Heart left ventricle (tissue), 16 donors: ENCODE measurements at regions of chr2 and their contacts with region 1.

Region 1: GRCh38 chr2:218269899-218270720 is at the starts of genes AAMP and PNKD:
- DNase-seq: peak; percentile 100
- ATAC-seq: peak; percentile 92 to 96 (median 94)
- H3K4me3 ChIP-seq: peak within 1 kb of the TSS; percentile 54 to 95 (median 87)
- H3K27ac ChIP-seq: peak within 1 kb of the TSS; percentile 71 to 88 (median 80)
- H3K4me1 ChIP-seq: peaks cover 3 to 60% (median 43%) of the 10 kb centered on the region in 12 donors
- H3K27me3 ChIP-seq: no peaks in the 10 kb centered on the region
- CTCF ChIP-seq: peak in 8 of 12 donors; percentile 26 to 56 (median 36)
- POLR2A ChIP-seq: peak; percentile 15 to 89
- total RNA-seq, gene AAMP: 51.6 to 127 (median 58.0) TPM
- total RNA-seq, gene PNKD: 53.8 to 78.7 (median 72.5) TPM

Region 2: GRCh38 chr2:218216674-218217359 is 53.3 kb before region 1 on chr2 and contains the start of gene ARPC2:
- intact Hi-C with region 1: loop called in 4 of 10 experiments (anchors 1 to 10 kb)
- DNase-seq: peak; percentile 96 to 97 (median 97)
- ATAC-seq: peak; percentile 92 to 98 (median 98)
- H3K4me3 ChIP-seq: peak within 1 kb of the TSS; percentile 62 to 99 (median 96)
- H3K27ac ChIP-seq: peak within 1 kb of the TSS; percentile 84 to 98 (median 96)
- H3K4me1 ChIP-seq: peaks cover 0 to 55% (median 39%) of the 10 kb centered on the region in 12 donors
- H3K27me3 ChIP-seq: no peaks in the 10 kb centered on the region
- CTCF ChIP-seq: peak in 1 of 12 donors; percentile 10
- POLR2A ChIP-seq: peak in 1 of 2 donors; percentile 85
- total RNA-seq, gene ARPC2: 126 to 278 (median 139) TPM

Region 3: GRCh38 chr2:218286570-218287459 is 16.7 kb after region 1 on chr2:
- intact Hi-C with region 1: loop called in 6 of 10 experiments (anchors 1 to 2 kb)
- DNase-seq: peak; percentile 88 to 96 (median 95)
- ATAC-seq: peak; percentile 83 to 89 (median 85)
- H3K4me3 ChIP-seq: peak overlapping the region; percentile 28 to 70 (median 53)
- H3K27ac ChIP-seq: peak overlapping the region; percentile 89 to 100 (median 96)
- H3K4me1 ChIP-seq: peaks cover 27 to 99% (median 92%) of the 10 kb centered on the region in 12 donors
- H3K27me3 ChIP-seq: no peaks in the 10 kb centered on the region
- CTCF ChIP-seq: no peak
- POLR2A ChIP-seq: peak in 1 of 2 donors; percentile 35

Region 4: DNA sequence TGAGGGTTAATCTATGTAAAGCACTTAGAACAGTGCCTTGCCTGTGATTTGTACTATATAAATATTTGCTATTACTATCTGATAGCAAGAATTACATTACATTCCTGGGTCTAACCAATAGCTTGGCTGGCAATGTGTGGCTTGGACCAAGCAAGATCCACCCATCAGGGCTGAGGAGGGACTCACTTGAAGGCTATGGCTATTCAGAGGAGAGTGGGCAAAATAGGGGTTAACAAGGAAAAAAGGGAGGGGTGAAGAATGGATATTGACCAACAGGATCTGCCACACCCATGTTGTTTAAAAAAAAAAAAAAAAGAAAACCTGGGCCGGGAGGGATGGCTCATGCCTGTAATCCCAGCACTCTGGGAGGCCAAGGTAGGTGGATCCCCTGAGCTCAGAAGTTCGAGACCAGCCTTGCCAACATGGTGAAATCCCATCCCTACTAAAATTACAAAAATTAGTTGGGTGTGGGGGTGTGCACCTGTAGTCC is 42.2 kb after region 1 on chr2:
- intact Hi-C with region 1: no loop called
- DNase-seq: no peak
- ATAC-seq: no peak
- H3K4me3 ChIP-seq: no peak overlapping the region
- H3K27ac ChIP-seq: no peak overlapping the region
- H3K4me1 ChIP-seq: peaks cover 0 to 23% (median 0%) of the 10 kb centered on the region in 12 donors
- H3K27me3 ChIP-seq: no peaks in the 10 kb centered on the region
- CTCF ChIP-seq: no peak
- POLR2A ChIP-seq: no peak

Region 5: GRCh38 chr2:218360447-218360846 is 90.3 kb after region 1 on chr2:
- intact Hi-C with region 1: loop called in 2 of 10 experiments (anchors 1 kb)
- DNase-seq: peak in 1 of 5 donors; percentile 46
- ATAC-seq: peak in 3 of 4 donors; percentile 53 to 69 (median 58)
- H3K4me3 ChIP-seq: no peak overlapping the region
- H3K27ac ChIP-seq: peak overlapping the region in 1 of 12 donors; percentile 50
- H3K4me1 ChIP-seq: peaks cover 0 to 18% (median 0%) of the 10 kb centered on the region in 12 donors
- H3K27me3 ChIP-seq: no peaks in the 10 kb centered on the region
- CTCF ChIP-seq: no peak
- POLR2A ChIP-seq: no peak

Region 6: GRCh38 chr2:218648088-218648786 is 378.1 kb after region 1 on chr2:
- intact Hi-C with region 1: loop called in 1 of 10 experiments (anchors 10 kb)
- DNase-seq: peak in 1 of 5 donors; percentile 44
- ATAC-seq: peak; percentile 15 to 73 (median 69)
- H3K4me3 ChIP-seq: no peak overlapping the region
- H3K27ac ChIP-seq: no peak overlapping the region
- H3K4me1 ChIP-seq: peaks cover 0 to 7% (median 0%) of the 10 kb centered on the region in 12 donors
- H3K27me3 ChIP-seq: no peaks in the 10 kb centered on the region
- CTCF ChIP-seq: peak; percentile 62 to 82 (median 74)
- POLR2A ChIP-seq: no peak

Region 7: DNA sequence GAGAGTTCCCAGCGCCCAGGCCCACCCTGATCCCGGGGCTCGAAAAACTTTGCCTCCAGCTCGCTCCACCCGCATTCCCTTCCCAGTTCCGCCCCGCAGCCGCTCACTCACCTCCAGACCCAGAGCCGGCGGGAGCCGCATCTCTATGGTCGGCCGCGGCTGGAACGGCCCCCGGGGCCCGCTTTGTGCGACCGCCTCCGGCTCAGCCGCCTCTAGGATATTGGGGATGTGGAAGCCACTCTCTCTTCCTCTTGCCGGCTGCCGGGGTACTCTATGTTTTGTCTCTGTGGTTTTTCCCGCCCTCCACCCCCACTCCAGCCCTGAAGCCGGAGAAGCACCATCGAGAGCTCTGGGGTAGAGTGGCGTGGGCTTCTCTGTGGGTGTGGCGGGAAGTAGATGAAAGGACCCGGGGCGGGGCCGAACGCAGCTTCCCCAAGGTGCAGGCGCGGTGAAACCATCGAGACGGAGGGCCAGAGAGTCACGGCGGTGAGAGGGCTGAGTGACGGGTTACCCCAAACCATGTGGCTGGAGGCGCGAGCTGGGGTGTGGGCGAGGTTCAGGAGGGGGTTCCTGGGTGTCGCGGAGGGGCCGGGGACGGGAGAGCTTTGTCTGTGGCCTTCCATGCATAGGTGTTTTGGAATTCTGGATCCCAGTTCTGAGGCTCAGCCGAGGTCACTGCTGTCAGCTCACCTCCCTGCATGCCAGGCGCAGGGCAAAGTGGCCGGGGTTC is 389.3 kb after region 1 on chr2 and contains the starts of genes BCS1L and ZNF142:
- intact Hi-C with region 1: no loop called
- DNase-seq: peak; percentile 92 to 95 (median 95)
- ATAC-seq: peak; percentile 89 to 98 (median 96)
- H3K4me3 ChIP-seq: peak within 1 kb of the TSS; percentile 60 to 96 (median 88)
- H3K27ac ChIP-seq: peak within 1 kb of the TSS; percentile 45 to 91 (median 82)
- H3K4me1 ChIP-seq: peaks cover 0 to 45% (median 25%) of the 10 kb centered on the region in 12 donors
- H3K27me3 ChIP-seq: no peaks in the 10 kb centered on the region
- CTCF ChIP-seq: no peak
- POLR2A ChIP-seq: peak in 1 of 2 donors; percentile 81
- total RNA-seq, gene BCS1L: 27.3 to 53.2 (median 43.7) TPM
- total RNA-seq, gene ZNF142: 18.1 to 46.0 (median 21.8) TPM